ENCODE measurements at regions of chr1 and their contacts with region 1.

Region 1: DNA sequence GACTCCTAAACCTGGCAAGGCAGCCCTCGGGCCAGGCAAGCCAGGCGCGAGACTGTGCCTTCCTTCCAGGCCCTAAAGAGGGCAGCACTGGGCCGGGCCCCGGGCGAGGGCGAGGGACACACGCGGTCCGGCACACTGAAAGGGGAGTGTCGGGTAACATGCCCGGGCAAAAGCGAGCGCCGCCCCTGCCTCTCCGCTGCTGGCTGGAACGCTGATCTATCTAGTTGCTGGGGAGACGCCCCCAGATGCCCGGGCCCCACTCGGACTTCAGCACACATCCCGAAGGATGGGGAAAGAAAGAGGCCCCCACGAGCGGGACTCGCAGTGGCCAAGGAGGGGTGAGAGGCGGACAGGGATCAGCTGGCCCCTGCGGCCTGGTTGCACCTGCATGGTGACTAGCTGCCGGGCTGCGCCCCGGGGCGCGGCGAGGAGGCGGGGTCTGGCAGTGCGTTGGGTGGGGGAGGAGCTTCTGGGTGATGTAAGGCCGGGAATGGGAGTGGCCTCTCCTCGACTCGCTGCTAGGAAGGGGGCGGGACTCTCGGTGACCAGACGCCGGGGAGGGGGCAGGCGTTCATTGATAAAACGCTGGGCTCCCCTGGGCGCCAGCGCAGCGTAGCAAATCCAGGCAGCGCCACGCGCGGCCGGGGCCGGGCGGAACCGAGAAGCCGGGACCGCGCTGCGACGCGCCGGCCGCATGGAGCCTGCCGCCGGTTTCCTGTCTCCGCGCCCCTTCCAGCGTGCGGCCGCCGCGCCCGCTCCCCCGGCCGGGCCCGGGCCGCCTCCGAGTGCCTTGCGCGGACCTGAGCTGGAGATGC is at the start of gene PLK3:
- DNase-seq: peak; percentile 99
- ATAC-seq: peak; percentile 96
- total RNA-seq, gene PLK3: 6.4 TPM

Region 2: DNA sequence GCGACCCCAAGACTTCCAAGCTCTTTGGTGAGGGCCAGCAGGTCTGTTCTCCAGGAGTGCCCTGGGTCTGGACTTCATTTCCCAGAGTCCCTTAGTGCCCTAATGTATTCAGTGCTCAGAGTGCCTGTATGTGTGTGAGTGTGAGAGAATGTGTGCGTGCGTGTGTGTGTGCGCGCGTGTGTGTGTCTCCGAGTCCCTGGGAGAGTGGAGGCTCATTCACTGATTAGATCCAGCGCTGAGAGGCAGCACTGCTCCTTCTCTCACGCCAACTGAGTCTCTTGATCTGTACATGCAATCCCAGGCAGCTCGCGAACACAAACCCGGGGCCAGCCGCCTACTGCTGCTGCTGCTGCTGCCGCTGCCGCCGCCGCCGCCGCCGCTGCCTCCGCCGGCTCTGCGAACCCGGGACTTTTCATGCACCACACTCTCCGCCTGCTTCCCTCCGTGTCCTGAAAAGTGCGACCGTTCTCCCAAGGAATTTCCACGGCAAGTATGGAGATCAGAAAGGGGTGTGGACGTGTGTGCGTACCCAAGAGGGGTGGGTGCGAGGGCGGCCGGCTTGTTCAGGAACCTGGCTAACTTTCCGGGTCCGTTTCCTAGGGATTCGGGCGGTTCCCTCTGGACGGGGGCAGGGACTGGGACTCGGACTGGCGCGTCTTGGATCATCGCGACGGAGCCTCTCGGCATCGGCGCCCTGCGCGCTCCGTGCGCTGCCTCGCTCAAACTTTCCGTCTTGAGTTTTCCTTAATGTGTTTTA is 394.8 kb before region 1 on chr1 and contains the start of gene RNF220:
- intact Hi-C with region 1: no loop called
- DNase-seq: peak; percentile 75
- ATAC-seq: peak; percentile 80
- total RNA-seq, gene RNF220: 76.4 TPM

Region 3: GRCh38 chr1:44819608-44820327 is 19.8 kb after region 1 on chr1:
- intact Hi-C with region 1: loop called (anchors 2 kb)
- DNase-seq: peak; percentile 89
- ATAC-seq: peak; percentile 92

Region 4: DNA sequence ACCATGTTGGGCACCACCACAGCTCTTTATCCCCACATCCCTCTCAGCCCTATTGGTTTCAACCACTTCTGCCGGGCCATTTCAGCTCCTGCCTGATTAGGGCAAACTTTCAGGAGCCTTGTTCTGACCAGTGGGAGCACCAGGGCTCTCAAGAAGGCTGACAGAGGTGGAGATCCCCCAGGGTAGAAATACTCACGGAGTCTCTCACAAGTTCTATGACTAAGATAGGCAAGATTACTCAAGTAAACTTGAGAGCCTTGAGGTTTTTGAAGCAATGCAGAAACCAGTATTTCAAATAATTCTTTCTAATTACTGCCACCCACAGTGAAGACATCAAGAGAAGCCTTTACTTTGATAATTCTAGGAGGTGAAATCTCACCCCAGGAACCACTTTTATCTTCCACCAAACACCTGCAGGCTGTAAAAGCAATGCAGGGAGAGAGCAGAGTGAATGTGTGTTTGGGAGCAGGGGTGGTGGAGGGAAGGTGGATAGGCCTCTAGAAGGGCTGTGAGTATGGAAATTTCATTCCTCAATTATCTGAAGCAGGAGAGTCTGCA is 49.7 kb after region 1 on chr1:
- intact Hi-C with region 1: no loop called
- DNase-seq: no peak
- ATAC-seq: no peak

Region 5: DNA sequence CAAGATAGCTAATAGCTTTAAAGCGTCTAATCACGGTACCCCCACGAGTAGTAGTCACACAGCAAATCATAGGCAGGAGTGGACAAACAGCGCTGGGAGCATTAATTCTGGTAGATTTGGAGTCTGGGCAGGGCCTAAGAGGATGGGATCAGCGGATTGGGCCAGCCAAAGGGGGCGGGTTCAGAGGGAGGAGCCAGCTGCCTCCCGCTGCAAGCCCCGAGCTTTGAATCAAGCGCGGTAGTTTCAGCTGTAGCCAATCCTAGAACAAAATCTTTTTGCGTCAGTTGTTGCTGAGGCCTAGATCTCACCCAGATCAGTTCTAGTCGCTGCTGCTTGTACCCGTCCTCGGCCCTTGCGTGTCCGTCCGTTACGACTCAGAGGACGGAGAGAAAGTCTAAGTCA is 783.3 kb after region 1 on chr1:
- intact Hi-C with region 1: loop called (anchors 10 kb)
- DNase-seq: peak; percentile 95
- ATAC-seq: peak; percentile 93

Measured in Right ventricle myocardium inferior (tissue), 1 donor.